ENCODE measurements at regions of chr16 and their contacts with region 1.

Region 1: DNA sequence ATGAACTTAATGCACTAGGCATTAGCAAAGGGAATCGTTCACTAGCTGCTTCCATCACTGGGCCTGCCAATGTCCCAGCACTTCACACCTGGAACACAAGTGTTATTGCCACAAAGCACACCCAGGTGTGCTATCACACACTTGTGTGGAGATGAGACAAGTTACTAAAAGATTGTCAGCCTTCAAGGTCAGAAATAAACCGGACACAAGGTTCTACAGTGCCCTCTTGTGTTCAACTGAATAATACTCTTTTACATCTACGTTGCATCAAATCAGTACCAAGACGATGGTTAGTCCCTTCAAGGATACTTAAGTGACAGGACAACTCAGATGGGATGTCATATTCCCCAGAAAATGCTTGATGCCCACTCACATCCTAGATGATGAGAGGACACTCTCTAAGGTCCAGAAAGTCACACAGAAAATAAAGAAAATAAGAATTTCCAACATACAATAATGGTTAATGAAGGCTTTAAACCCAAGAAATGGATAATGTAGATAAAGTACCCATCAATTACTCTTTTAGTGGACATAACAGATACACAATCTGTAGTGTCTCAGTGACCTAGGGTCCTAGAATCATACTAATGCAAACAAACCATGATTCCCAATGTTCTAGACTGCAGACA is 16.4 kb upstream of the GLG1 start:
- DNase-seq: no peak
- H3K4me3 ChIP-seq: no peak overlapping the region
- H3K27ac ChIP-seq: no peak overlapping the region
- H3K4me1 ChIP-seq: no peaks in the 10 kb centered on the region
- H3K27me3 ChIP-seq: no peaks in the 10 kb centered on the region
- CTCF ChIP-seq: peak; percentile 44

Region 2: GRCh38 chr16:74480141-74481029 is 142.9 kb before region 1 on chr16:
- intact Hi-C with region 1: loop called (anchors 10 kb)
- DNase-seq: peak; percentile 92
- H3K4me3 ChIP-seq: no peak overlapping the region
- H3K27ac ChIP-seq: peak overlapping the region; percentile 30
- H3K4me1 ChIP-seq: peaks cover 3% of the 10 kb centered on the region
- H3K27me3 ChIP-seq: no peaks in the 10 kb centered on the region
- CTCF ChIP-seq: no peak